Dendritic cell treated with granulocyte-macrophage colony-stimulating factor and Interleukin-4, amounts not matched to agents 40 ng/mL and 50 ng/mL, for 4 days (primary cell): ENCODE measurements at regions of chrX and their contacts with region 1.

Region 1: DNA sequence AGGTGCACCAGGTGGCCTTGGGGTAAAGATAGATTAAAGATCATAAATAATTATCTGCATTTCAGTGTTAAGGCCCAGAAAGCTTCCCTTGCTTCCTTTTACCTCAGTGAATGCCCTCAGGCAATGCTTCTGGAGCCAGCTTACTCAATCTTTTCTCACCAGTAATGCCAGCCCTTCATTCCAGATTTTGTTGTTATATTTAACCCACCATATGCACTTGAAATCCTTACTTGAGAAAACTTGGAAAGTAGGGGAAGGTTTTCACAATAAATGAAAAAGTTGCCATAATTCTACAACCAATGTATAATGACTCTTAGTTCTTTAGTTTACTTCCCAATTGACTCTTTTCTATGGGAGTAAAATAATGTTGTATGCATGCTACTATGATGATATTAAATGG is 17.1 kb upstream of the PBDC1 start:
- H3K4me3 Mint-ChIP-seq: no peak overlapping the region
- H3K27ac Mint-ChIP-seq: no peak overlapping the region
- H3K4me1 Mint-ChIP-seq: no peaks in the 10 kb centered on the region
- H3K27me3 Mint-ChIP-seq: no peaks in the 10 kb centered on the region

Region 2: GRCh38 chrX:75968293-75968692 is 187.5 kb before region 1 on chrX:
- intact Hi-C with region 1: no loop called
- H3K4me3 Mint-ChIP-seq: no peak overlapping the region
- H3K27ac Mint-ChIP-seq: no peak overlapping the region
- H3K4me1 Mint-ChIP-seq: no peaks in the 10 kb centered on the region
- H3K27me3 Mint-ChIP-seq: no peaks in the 10 kb centered on the region

Region 3: GRCh38 chrX:76202471-76202870 is 46.7 kb after region 1 on chrX:
- intact Hi-C with region 1: no loop called
- H3K4me3 Mint-ChIP-seq: no peak overlapping the region
- H3K27ac Mint-ChIP-seq: no peak overlapping the region
- H3K4me1 Mint-ChIP-seq: peaks cover 5% of the 10 kb centered on the region
- H3K27me3 Mint-ChIP-seq: peaks cover 2% of the 10 kb centered on the region

Region 4: GRCh38 chrX:76248901-76249300 is 93.1 kb after region 1 on chrX:
- intact Hi-C with region 1: loop called (anchors 5 kb)
- H3K4me3 Mint-ChIP-seq: no peak overlapping the region
- H3K27ac Mint-ChIP-seq: no peak overlapping the region
- H3K4me1 Mint-ChIP-seq: no peaks in the 10 kb centered on the region
- H3K27me3 Mint-ChIP-seq: no peaks in the 10 kb centered on the region

Region 5: DNA sequence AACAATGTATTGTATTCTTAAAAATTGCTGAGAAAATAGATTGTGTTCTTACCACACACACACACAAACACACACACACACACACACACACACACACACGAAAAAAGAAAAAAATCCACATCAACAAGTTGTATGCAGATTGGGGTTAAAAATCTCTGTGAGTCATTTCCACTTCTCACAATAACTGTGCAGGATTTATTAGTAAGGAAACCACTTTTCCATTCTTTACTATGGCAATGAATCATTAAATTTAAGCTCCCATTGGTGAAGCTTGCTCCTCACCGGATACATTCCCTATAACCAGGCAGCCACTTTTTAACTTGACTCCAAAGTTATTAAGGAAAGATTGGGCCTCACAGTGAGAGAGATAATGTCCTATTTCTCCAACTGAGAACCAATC is 252.0 kb after region 1 on chrX:
- intact Hi-C with region 1: no loop called
- H3K4me3 Mint-ChIP-seq: no peak overlapping the region
- H3K27ac Mint-ChIP-seq: no peak overlapping the region
- H3K4me1 Mint-ChIP-seq: no peaks in the 10 kb centered on the region
- H3K27me3 Mint-ChIP-seq: no peaks in the 10 kb centered on the region